ENCODE measurements at regions of chr6 and their contacts with region 1.

Region 1: DNA sequence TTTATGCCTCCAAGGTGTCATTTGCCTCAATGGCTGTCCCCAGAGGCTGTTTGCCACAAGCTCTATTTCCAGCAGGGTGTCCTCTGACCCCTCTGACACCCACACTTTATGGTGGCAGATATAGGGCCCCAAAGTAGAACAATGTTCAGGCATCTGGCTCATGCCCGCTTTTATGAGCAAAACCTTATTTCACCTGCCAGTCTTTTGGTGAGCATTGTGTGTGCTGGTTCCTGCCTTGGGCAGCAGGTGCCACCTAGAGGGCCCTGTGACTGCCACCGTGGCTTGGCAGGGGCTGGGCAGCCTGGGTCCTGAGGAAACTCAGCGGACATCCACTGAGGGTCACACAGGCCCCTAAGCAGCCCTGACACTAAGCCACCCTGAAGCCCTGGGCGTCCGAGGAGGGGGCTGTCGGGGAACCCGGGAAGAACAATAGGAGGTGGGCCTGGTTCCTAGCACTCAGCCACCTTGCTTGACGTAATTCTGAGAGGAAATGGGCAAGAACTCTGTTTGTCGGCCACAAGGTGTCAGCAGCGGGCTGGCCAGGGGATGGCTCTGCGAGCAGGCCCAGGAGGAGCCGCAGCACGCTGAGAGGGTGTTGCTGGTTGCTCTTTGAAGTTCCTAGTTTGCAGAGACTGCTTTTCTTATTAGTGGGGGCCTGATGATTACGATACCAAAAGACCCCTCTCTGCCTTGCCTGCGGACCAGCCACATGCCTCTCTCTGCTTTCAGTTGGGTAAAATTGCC is 148.9 kb downstream of the SCML4 start:
- H3K4me3 ChIP-seq: peak overlapping the region; percentile 28
- H3K27ac ChIP-seq: peak overlapping the region; percentile 1; the same call in 1 of the 2 replicates
- H3K4me1 ChIP-seq: 0 out of 2 replicates have a peak, but pooled peaks cover 4% of the 10 kb centered on the region
- CTCF ChIP-seq: peak; percentile 99

Region 2: GRCh38 chr6:107459283-107460082 is 215.7 kb before region 1 on chr6 and contains the start of gene PDSS2:
- CTCF ChIA-PET with region 1: interaction called, 15 read pairs
- POLR2A ChIA-PET with region 1: interaction called, 4 read pairs
- H3K4me3 ChIP-seq: peak within 1 kb of the TSS; percentile 70
- H3K27ac ChIP-seq: peak within 1 kb of the TSS; percentile 91
- H3K4me1 ChIP-seq: no peaks in the 10 kb centered on the region; the same call in 1 of the 2 replicates
- CTCF ChIP-seq: peak; percentile 95

Region 3: GRCh38 chr6:107513214-107513613 is 162.0 kb before region 1 on chr6:
- CTCF ChIA-PET with region 1: no interaction called
- POLR2A ChIA-PET with region 1: no interaction called
- H3K4me3 ChIP-seq: no peak overlapping the region
- H3K27ac ChIP-seq: no peak overlapping the region
- H3K4me1 ChIP-seq: peaks cover 15% of the 10 kb centered on the region
- CTCF ChIP-seq: no peak

Region 4: DNA sequence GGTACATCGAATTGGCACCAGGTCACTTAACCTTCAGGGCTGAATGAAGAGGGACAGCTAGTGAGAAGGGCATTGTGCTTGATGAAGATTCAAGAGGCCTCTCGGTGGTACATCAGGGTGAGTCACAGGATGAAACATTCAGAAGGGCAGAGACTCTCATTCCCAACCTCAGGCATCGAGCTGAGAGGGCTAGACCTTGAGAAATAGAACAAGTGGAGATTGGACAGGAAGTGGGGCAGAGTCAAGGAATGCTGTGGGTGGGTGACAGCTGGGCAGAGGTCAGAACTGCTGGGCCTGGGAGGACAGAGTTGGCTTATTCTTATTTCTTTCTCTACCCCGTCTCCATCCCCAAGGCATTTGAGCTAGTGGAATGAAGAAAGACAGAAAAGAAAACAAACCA is 23.0 kb after region 1 on chr6:
- CTCF ChIA-PET with region 1: interaction called, 26 read pairs
- POLR2A ChIA-PET with region 1: no interaction called
- H3K4me3 ChIP-seq: no peak overlapping the region
- H3K27ac ChIP-seq: no peak overlapping the region
- H3K4me1 ChIP-seq: no peaks in the 10 kb centered on the region
- CTCF ChIP-seq: no peak

Region 5: DNA sequence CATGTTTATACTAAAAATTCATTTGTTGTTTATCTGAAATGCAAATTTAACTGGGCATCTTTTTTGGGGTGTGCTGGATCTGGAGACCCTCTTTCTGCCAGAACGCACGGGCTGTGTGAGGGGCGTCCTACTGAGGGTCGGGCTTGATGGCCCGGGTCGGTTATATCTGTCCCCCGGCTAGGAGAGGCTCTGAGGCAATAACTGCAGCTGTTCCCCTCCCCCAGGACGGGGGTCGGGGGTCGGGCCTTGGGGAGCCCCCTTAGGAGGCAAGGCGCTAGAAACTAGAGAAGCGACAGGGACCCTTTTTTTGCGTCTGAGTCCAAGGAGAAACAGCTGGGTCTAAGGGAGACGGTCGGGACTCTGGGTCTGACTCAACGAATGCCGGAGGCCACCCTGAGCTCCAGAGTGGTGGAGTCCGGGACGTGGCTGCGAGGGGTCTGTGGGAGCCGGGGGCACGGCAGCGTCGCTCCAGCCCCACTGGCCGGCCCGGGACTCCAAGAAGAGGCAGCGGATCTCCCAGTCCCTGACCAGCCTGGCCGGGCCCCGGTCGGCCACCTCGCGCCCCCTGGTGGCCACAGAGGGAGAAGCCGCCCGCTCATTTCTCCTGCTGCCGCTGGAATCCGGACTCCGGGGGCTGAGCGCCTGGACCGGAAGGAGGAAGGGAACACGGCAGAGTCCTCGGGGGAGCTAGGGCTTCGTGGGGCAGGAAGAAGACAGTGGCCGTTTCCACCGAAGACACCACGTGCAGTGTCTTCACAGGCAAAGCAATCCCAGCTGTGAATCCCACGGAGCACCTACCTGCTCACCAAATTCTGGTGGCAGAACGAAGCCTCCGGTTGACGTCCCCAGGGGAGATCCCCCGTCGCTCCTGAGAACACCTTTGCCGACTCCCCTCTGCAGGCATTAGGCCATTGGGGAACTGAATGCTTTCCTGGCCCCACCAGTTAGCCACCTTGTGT is 173.0 kb after region 1 on chr6:
- CTCF ChIA-PET with region 1: interaction called, 49 read pairs
- POLR2A ChIA-PET with region 1: no interaction called
- H3K4me3 ChIP-seq: peak overlapping the region; percentile 35
- H3K27ac ChIP-seq: no peak overlapping the region
- H3K4me1 ChIP-seq: no peaks in the 10 kb centered on the region
- CTCF ChIP-seq: peak; percentile 93

Region 6: GRCh38 chr6:108052706-108053105 is 377.5 kb after region 1 on chr6:
- CTCF ChIA-PET with region 1: interaction called, 8 read pairs
- POLR2A ChIA-PET with region 1: interaction called, 13 read pairs
- H3K4me3 ChIP-seq: no peak overlapping the region
- H3K27ac ChIP-seq: no peak overlapping the region
- H3K4me1 ChIP-seq: no peaks in the 10 kb centered on the region
- CTCF ChIP-seq: no peak